ENCODE measurements at regions of chr5 and their contacts with region 1.

Region 1: GRCh38 chr5:9361835-9362234 is 184.0 kb downstream of the SEMA5A start:
- DNase-seq: peak in 3 of 5 donors; percentile 30 to 35 (median 32)
- ATAC-seq: peak in 2 of 4 donors; percentile 52 to 56
- H3K4me3 ChIP-seq: no peak overlapping the region
- H3K27ac ChIP-seq: no peak overlapping the region
- H3K4me1 ChIP-seq: peaks cover 0 to 31% (median 11%) of the 10 kb centered on the region in 12 donors
- H3K27me3 ChIP-seq: no peaks in the 10 kb centered on the region
- CTCF ChIP-seq: peak; percentile 41 to 66 (median 54)
- POLR2A ChIP-seq: no peak

Region 2: DNA sequence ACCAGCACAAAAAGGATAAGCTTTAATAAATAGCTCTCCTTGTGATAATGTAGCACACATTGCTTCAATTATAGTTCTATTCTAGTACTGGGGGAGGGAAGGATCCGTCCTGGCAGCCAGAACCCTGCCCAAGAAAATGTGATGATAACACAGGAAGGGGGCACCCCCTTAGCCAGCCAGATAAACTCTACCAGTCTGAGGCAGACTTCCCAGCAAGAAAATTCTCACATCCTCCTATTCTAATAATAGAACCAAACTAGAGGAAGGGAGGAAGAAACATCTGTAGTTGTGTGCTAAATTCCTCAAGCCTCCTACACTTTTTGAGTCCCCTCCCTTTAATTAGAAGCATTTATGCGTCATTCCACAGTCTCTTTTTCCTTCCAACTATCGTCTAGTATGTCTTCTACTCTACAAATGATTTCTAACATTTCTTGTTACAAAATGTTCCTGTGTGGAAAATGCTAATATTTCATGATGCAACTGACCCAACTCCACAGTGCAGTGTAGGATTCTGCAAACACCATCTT is 77.0 kb before region 1 on chr5:
- intact Hi-C with region 1: no loop called
- DNase-seq: peak in 4 of 5 donors; percentile 46 to 65 (median 52)
- ATAC-seq: peak; percentile 84 to 93 (median 90)
- H3K4me3 ChIP-seq: no peak overlapping the region
- H3K27ac ChIP-seq: peak overlapping the region; percentile 21 to 77 (median 60)
- H3K4me1 ChIP-seq: peaks cover 0 to 36% (median 15%) of the 10 kb centered on the region in 12 donors
- H3K27me3 ChIP-seq: no peaks in the 10 kb centered on the region
- CTCF ChIP-seq: no peak
- POLR2A ChIP-seq: no peak

Region 3: DNA sequence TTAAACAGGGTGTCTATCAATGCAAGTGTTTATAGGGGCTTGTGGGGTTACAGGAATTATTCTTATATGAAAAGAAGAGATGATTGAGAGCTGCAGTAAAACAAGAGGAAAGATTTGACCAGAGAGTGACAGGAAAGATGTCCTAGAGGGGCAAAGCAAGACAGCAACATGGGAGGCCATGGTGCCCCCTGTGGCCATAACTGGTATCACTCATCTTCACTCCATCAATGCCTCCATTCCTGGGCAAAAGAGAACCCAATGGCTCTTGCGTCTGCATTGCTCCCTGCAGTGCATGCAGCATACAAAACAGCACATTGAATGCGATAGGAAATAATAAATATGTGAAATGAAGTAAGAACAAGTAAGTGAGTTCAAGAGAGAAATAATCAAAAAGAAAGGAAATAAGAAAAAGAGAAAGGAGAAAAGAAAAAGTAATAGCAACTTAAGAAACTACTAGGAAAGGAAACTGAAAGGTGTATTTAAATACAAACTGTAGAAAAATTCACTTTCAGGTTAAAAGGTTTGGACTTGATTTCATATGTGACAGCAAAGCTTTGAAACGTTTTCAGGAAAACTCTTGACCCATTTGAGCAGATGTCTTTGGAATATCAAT is 22.5 kb before region 1 on chr5:
- intact Hi-C with region 1: no loop called
- DNase-seq: no peak
- ATAC-seq: no peak
- H3K4me3 ChIP-seq: no peak overlapping the region
- H3K27ac ChIP-seq: no peak overlapping the region
- H3K4me1 ChIP-seq: peaks cover 0 to 27% (median 4%) of the 10 kb centered on the region in 12 donors
- H3K27me3 ChIP-seq: no peaks in the 10 kb centered on the region
- CTCF ChIP-seq: peak in 5 of 12 donors; percentile 6 to 33 (median 19)
- POLR2A ChIP-seq: no peak

Region 4: GRCh38 chr5:9498541-9499497 is 137.0 kb after region 1 on chr5:
- intact Hi-C with region 1: loop called in 2 of 10 experiments (anchors 5 to 10 kb)
- DNase-seq: no peak
- ATAC-seq: no peak
- H3K4me3 ChIP-seq: no peak overlapping the region
- H3K27ac ChIP-seq: peak overlapping the region in 2 of 12 donors; percentile 7 to 32
- H3K4me1 ChIP-seq: peaks cover 0 to 40% (median 19%) of the 10 kb centered on the region in 12 donors
- H3K27me3 ChIP-seq: no peaks in the 10 kb centered on the region
- CTCF ChIP-seq: peak in 7 of 12 donors; percentile 12 to 40 (median 23)
- POLR2A ChIP-seq: no peak

Region 5: DNA sequence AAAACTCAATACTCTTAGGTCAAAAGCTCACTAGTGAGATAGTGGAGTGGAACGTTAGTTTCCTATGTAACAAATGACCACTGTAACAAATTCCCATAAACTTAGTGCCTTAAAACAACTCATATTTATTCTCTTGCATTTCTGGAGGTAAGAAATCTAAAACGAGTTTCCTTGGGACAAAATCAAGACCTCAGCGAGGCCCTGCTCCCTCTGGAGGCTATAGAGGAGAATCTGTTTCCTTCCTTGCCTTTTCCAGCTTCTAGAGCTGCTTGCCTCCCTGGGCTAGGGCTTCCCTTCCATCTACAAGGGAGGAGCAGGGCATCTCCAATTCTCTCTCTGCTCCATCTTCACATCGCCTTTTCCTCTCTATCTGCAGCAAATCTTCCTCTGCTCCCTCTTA is 152.0 kb after region 1 on chr5:
- intact Hi-C with region 1: loop called in 1 of 10 experiments (anchors 10 kb)
- DNase-seq: no peak
- ATAC-seq: no peak
- H3K4me3 ChIP-seq: no peak overlapping the region
- H3K27ac ChIP-seq: peak overlapping the region in 10 of 12 donors; percentile 2 to 88 (median 66)
- H3K4me1 ChIP-seq: peaks cover 0 to 53% (median 14%) of the 10 kb centered on the region in 12 donors
- H3K27me3 ChIP-seq: no peaks in the 10 kb centered on the region
- CTCF ChIP-seq: peak in 4 of 12 donors; percentile 26 to 42 (median 31)
- POLR2A ChIP-seq: no peak

Measured in heart left ventricle (tissue), 16 donors.